ENCODE measurements at regions of chr17 and their contacts with region 1.

Region 1: DNA sequence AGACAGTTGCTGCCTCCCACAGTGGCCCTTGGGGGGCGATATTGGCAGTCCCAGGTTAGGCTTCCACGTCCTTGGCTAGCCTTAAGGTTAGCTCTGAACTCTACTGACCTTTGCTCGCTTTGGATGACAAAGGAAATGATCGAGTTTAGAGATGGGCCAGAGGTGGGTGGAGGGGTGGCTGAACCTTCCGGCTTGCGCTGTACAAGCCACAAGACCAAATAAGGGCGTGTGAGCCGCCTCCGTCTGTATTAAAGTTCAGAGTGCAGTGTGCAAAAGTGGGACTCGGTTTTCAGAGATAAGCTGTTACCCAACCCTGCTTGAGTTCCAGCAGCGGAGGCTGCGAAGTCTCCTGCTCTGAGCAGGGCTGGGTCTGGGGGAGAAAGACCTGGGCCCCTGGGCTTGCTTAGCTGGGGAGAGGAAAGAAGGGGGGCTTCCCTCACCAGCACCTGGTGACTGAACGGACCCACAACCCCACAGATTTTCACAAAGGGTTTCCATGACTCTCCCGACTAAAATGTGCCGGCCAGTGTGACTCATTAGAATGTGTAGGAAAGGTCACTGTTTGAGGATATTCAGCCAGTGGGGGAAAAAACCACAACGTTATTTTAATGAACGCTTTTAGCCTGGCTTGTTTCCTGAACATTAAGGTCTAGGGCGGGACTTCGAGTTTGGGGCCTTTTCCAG is 67.2 kb downstream of the CENPV start:
- DNase-seq: peak; percentile 93
- H3K4me3 ChIP-seq: no peak overlapping the region
- H3K27ac ChIP-seq: peak overlapping the region; percentile 90
- H3K4me1 ChIP-seq: peaks cover 20% of the 10 kb centered on the region
- H3K27me3 ChIP-seq: no peaks in the 10 kb centered on the region
- CTCF ChIP-seq: peak; percentile 55

Region 2: DNA sequence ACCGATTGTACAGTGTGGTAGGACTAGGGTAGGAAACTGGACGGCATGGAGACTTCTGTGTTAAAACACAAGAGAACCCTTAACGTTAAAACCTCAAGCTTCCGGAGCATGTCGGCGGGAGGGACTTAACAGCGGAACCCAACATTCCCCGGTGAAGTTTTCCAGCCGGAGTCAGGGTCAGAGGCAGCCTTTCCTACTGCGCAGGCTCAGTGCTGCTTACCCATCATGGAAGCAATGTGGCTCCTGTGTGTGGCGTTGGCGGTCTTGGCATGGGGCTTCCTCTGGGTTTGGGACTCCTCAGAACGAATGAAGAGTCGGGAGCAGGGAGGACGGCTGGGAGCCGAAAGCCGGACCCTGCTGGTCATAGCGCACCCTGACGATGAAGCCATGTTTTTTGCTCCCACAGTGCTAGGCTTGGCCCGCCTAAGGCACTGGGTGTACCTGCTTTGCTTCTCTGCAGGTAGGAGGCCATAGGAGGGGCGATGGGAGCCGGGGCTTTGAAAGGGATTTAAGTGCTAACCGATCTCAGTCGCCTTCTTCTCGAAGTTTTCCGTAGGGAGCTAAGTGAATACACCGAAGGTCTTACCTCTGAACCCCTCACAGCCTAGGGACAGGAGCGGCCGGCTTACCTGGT is 69.0 kb before region 1 on chr17 and contains the start of gene PIGL:
- intact Hi-C with region 1: loop called (anchors 2 kb)
- DNase-seq: peak; percentile 93
- H3K4me3 ChIP-seq: peak within 1 kb of the TSS; percentile 65
- H3K27ac ChIP-seq: peak within 1 kb of the TSS; percentile 99
- H3K4me1 ChIP-seq: no peaks in the 10 kb centered on the region
- H3K27me3 ChIP-seq: no peaks in the 10 kb centered on the region
- CTCF ChIP-seq: no peak
- total RNA-seq, gene PIGL: 24.7 to 25.4 TPM